Panc1 (cell line): ENCODE measurements at regions of chr1 and their contacts with region 1.

Region 1: DNA sequence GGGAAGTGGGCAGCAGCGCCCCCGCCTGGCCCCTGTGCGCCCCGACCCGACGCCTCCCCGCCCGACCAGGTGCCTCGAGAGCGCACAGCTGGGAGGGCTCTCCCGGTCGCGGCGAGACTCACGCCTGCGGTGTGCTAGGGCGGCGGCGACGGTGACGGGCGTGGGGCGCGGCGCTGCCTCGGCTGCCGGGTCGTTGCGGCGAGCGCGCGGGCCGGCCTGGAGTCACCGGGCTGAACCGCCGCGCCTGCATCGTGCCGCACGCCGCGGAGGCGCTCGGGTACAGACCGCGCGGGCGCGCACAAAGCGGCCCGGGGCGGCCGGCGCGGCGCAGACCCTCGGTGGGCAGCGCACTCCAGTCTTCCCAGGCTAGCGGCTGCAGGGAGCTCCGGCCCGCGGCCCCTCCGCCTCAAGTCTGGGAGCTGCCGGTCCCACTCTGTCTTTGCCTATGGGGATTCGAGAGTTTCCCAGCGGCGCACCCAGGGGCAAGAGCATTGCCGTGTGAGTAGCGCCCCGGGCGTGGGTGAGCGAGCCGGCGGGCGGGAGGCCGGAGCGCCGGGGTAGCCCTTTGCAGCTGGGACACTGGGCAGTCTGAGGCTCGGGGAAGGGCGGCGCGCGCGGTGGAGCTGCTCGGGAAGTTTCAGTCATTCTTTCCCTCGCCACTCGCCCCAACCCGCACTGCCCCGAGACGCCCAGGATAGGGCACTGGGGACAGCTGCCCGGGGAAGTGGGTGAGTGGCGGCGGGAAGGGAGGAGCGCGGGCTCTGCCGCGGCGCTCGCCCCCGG is at the start of gene SLC35F3:
- DNase-seq: no peak
- ATAC-seq: peak; percentile 91
- H3K4me3 ChIP-seq: peak within 1 kb of the TSS; percentile 68 to 95
- H3K27ac ChIP-seq: peak within 1 kb of the TSS; percentile 97
- H3K4me1 ChIP-seq: peaks cover 21% of the 10 kb centered on the region
- H3K27me3 ChIP-seq: no peaks in the 10 kb centered on the region
- CTCF ChIP-seq: peak; percentile 95
- total RNA-seq, gene SLC35F3: 19.1 TPM

Region 2: DNA sequence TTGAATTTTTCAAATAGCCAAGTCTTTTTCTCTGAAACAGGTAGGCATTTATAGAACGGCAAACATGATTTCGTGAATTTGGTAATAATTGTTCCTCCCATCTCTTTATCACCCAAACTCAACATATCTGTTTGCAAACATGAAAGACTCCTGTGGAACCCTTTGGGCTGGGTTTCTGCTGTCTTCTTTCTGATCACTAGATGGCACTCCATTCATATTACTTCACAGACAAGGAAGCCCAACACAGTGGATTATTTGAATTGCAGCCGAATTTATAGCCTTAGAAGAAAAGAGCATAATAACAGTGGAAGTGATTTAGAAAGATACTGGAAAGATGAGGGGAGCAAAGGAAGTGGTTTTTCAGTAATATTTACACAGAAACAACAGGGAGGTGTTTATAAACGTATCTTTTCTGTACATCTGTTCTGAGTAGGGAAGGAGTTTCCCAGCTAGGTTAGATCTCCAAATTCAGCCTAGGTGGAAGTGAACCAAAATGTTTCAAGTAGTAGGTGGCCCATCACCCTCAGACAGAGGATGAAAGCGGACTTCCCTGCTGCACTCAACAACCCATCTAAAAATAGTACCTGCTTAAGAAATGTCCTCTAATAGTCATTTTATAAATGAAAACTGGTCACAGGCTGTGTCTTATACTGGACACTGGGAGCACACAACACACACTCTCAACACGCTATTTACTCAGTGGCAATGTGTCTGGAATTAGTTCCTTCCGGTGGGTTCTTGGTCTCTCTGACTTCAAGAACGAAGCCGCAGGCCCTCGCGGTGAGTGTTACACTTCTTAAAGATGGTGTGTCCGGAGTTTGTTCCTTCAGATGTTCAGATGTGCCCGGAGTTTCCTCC is 509.7 kb before region 1 on chr1:
- CTCF ChIA-PET with region 1: no interaction called
- POLR2A ChIA-PET with region 1: no interaction called
- in situ Hi-C with region 1: no loop called
- intact Hi-C with region 1: loop called (anchors 10 kb)
- DNase-seq: peak; percentile 51
- ATAC-seq: peak; percentile 95
- H3K4me3 ChIP-seq: no peak overlapping the region
- H3K27ac ChIP-seq: no peak overlapping the region
- H3K4me1 ChIP-seq: 0 out of 2 replicates have a peak, but pooled peaks cover 4% of the 10 kb centered on the region
- H3K27me3 ChIP-seq: no peaks in the 10 kb centered on the region
- CTCF ChIP-seq: peak; percentile 81; the same call in 1 of the 2 replicates

Region 3: DNA sequence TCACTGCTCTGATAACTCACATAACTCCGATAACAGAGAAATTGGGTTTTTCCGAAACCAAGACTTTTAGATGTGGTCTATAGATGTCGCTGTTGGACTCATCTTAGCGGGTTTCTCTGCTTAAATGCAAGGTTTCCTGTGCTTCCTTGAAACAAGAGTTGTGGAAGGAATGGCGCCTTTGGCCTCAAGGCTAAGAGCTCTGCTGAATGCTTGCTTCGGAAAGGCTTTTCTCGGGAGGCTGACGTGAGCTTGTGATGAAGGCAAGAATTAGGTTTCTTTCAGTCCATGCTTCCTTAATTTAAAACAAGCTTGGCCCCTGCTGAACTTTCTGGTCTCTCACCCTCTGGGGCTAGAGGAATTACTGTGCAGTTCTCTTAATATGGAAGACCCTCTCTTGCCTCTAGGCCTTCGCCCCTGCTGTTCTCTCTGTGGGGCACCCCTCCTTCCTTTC is 463.8 kb before region 1 on chr1:
- CTCF ChIA-PET with region 1: interaction called, 9 read pairs
- POLR2A ChIA-PET with region 1: no interaction called
- in situ Hi-C with region 1: no loop called
- intact Hi-C with region 1: loop called (anchors 5 kb)
- DNase-seq: peak; percentile 38
- ATAC-seq: peak; percentile 84
- H3K4me3 ChIP-seq: no peak overlapping the region
- H3K27ac ChIP-seq: no peak overlapping the region
- H3K4me1 ChIP-seq: no peaks in the 10 kb centered on the region
- H3K27me3 ChIP-seq: peaks cover 10% of the 10 kb centered on the region; the same call in 1 of the 2 replicates
- CTCF ChIP-seq: peak; percentile 77

Region 4: DNA sequence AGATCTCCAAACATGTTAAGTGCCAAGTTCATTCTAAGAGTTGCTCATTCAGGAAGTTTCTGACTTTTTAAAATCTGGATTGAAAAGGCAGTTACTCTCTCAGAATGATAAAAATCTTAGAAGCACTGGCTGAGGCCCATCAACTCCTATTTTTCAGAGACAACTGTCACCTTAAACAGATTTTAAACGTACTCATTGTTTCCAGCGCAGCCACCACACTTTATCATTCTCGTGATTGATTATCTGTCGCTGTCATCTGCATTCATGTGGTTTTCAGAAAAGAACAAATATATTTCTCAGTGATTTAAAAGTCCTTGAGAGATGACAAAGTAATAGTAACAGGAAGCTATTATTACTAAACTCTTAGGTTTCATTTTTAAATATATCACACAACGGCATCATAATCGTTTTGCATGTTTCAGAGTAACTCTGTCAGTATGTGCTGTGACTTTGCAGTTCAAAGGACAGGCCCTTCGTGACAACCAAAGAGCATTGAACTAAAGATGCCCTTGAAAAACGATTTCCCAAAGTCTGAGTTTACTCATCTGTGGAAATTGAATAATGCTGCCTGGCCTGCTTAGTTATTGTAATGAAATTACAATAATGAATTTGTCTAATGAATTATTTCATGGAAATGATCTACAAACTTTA is 305.8 kb before region 1 on chr1:
- CTCF ChIA-PET with region 1: no interaction called
- POLR2A ChIA-PET with region 1: interaction called, 10 read pairs
- in situ Hi-C with region 1: no loop called
- intact Hi-C with region 1: no loop called
- DNase-seq: no peak
- ATAC-seq: no peak
- H3K4me3 ChIP-seq: no peak overlapping the region
- H3K27ac ChIP-seq: no peak overlapping the region
- H3K4me1 ChIP-seq: no peaks in the 10 kb centered on the region
- H3K27me3 ChIP-seq: peaks cover 9% of the 10 kb centered on the region
- CTCF ChIP-seq: no peak

Region 5: DNA sequence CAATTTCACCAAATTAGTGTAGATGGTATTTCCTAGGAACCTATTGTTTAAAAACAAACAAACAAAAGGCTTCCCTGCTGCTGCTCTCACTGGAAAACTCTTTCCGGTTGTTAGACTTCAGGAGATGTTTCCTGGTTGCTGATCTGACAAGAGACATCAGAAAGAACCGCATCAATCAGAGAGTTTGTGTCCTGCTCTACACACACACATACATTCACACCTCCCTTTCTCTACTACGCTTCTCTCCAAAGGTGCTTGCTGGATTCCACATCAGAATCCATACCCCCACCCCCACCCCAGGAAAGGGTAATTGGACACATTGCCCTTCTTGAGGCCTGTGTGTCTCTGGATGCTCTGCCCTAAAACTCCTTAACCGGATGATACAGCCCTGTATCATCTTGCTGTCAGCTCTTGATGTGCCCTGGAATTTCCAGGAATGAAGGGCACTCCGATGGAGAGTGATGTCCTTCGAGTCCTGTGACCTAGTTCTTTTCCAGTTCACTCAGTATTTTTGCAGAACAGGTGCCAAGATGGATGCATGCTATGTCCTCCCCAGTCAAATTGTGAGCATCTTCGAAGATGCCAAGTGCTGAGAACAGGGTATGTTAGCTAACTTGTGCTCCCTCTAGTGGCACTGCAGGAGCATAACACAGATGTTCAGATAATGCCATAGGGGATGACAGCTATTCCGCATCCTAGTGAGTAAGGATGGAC is 114.0 kb before region 1 on chr1:
- CTCF ChIA-PET with region 1: no interaction called
- POLR2A ChIA-PET with region 1: no interaction called
- in situ Hi-C with region 1: no loop called
- intact Hi-C with region 1: loop called (anchors 10 kb)
- DNase-seq: peak; percentile 71
- ATAC-seq: peak; percentile 97
- H3K4me3 ChIP-seq: no peak overlapping the region
- H3K27ac ChIP-seq: no peak overlapping the region
- H3K4me1 ChIP-seq: no peaks in the 10 kb centered on the region
- H3K27me3 ChIP-seq: peaks cover 3% of the 10 kb centered on the region; the same call in 1 of the 2 replicates
- CTCF ChIP-seq: peak; percentile 91

Region 6: DNA sequence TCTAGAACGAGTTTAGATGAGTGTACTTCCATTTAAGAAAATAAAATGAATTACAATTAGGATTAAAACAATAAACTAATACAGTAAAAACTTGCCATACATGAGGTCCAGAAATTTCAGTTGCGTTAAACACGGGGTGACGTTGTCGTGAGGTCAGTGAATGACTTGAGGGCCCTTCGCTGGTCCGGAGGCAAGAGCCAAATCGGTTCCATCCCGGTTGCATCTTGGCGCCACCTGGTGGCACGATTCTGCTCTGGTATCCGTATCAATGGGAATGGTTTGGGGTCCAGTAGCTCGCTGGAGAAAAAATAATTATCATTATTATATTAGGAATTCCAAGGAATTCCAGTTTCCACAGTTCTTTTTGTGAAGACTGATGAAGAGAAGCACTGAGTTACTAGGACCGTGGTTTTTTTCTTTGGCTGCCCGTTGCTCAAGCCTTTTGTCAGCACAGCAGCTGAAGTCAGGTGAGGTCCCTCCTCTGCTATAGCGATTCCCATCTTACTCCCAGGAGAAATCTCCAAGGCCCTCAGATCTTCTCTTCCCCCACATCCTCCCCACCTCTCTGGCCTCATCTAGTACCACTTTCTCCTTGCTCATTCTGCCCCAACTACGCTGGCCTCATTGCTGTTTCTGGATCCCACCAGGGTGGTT is 161.1 kb after region 1 on chr1:
- CTCF ChIA-PET with region 1: no interaction called
- POLR2A ChIA-PET with region 1: no interaction called
- in situ Hi-C with region 1: no loop called
- intact Hi-C with region 1: loop called (anchors 5 kb)
- DNase-seq: no peak
- ATAC-seq: peak; percentile 87
- H3K4me3 ChIP-seq: no peak overlapping the region
- H3K27ac ChIP-seq: no peak overlapping the region
- H3K4me1 ChIP-seq: no peaks in the 10 kb centered on the region
- H3K27me3 ChIP-seq: no peaks in the 10 kb centered on the region
- CTCF ChIP-seq: peak; percentile 91

Region 7: GRCh38 chr1:234955107-234955731 is 1050.4 kb after region 1 on chr1:
- CTCF ChIA-PET with region 1: interaction called, 14 read pairs
- POLR2A ChIA-PET with region 1: no interaction called
- in situ Hi-C with region 1: no loop called
- intact Hi-C with region 1: no loop called
- DNase-seq: no peak
- ATAC-seq: no peak
- H3K4me3 ChIP-seq: no peak overlapping the region
- H3K27ac ChIP-seq: peak overlapping the region; percentile 100
- H3K4me1 ChIP-seq: peaks cover 62% of the 10 kb centered on the region
- H3K27me3 ChIP-seq: no peaks in the 10 kb centered on the region
- CTCF ChIP-seq: no peak